Right lobe of liver (tissue), 6 donors: ENCODE measurements at regions of chr20 and their contacts with region 1.

Region 1: GRCh38 chr20:815914-816606 is 17.5 kb upstream of the FAM110A start:
- DNase-seq: peak; percentile 64 to 70 (median 68)
- ATAC-seq: peak; percentile 80 to 90 (median 86)
- H3K4me3 ChIP-seq: no peak overlapping the region
- H3K27ac ChIP-seq: no peak overlapping the region
- H3K4me1 ChIP-seq: no peaks in the 10 kb centered on the region
- H3K27me3 ChIP-seq: no peaks in the 10 kb centered on the region
- CTCF ChIP-seq: peak; percentile 92 to 96 (median 93)
- POLR2A ChIP-seq: no peak

Region 2: GRCh38 chr20:699811-700338 is 116.2 kb before region 1 on chr20:
- intact Hi-C with region 1: no loop called
- DNase-seq: peak; percentile 89 to 96 (median 96)
- ATAC-seq: peak; percentile 96 to 98 (median 98)
- H3K4me3 ChIP-seq: no peak overlapping the region
- H3K27ac ChIP-seq: peak overlapping the region in 2 of 3 donors; percentile 43 to 44
- H3K4me1 ChIP-seq: peaks cover 0 to 13% (median 4%) of the 10 kb centered on the region in 4 donors
- H3K27me3 ChIP-seq: no peaks in the 10 kb centered on the region
- CTCF ChIP-seq: no peak
- POLR2A ChIP-seq: no peak

Region 3: DNA sequence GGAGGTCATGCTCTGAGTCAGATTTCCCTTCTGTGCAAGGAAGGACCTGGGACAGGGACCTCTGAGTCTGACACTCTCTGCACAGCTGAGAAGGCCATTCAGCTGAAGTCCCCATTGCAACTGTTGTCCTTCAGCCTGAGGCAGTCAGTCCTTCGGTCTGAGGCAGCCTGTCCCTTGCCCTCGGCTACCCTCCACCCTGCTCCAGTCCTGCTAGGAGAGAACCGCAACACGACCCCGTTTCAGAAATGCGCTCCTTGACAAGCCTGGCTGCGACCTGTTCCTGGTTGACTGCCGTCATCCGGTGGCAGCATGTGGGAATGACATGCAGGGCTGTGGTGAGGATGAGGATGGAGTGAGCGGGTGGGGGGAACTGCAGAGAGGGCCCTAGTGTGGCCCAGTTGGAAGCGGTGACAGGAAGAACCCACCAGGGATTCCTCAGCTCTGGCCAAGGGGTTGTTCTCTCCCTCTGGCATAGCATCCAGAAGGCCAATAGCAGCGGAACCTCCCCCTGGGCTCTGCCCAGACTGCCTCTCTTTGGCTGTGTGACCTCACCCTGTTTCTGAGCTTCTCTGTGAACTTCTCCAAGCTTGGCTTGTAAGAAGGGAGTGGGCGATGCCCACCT is 140.4 kb after region 1 on chr20:
- intact Hi-C with region 1: loop called (anchors 5 kb)
- DNase-seq: peak; percentile 62 to 75 (median 69)
- ATAC-seq: peak; percentile 80 to 93 (median 88)
- H3K4me3 ChIP-seq: no peak overlapping the region
- H3K27ac ChIP-seq: no peak overlapping the region
- H3K4me1 ChIP-seq: no peaks in the 10 kb centered on the region
- H3K27me3 ChIP-seq: peaks cover 0 to 6% of the 10 kb centered on the region in 2 donors
- CTCF ChIP-seq: peak; percentile 94 to 97 (median 96)
- POLR2A ChIP-seq: no peak